ENCODE measurements at regions of chr3 and their contacts with region 1.

Region 1: GRCh38 chr3:83946554-83946953 is 1012.2 kb upstream of the CADM2 start:
- DNase-seq: peak; percentile 26
- H3K4me3 Mint-ChIP-seq: no peak overlapping the region
- H3K27ac Mint-ChIP-seq: peak overlapping the region; percentile 89
- H3K4me1 Mint-ChIP-seq: peaks cover 18% of the 10 kb centered on the region
- H3K27me3 Mint-ChIP-seq: no peaks in the 10 kb centered on the region
- CTCF ChIP-seq: peak; percentile 14

Region 2: DNA sequence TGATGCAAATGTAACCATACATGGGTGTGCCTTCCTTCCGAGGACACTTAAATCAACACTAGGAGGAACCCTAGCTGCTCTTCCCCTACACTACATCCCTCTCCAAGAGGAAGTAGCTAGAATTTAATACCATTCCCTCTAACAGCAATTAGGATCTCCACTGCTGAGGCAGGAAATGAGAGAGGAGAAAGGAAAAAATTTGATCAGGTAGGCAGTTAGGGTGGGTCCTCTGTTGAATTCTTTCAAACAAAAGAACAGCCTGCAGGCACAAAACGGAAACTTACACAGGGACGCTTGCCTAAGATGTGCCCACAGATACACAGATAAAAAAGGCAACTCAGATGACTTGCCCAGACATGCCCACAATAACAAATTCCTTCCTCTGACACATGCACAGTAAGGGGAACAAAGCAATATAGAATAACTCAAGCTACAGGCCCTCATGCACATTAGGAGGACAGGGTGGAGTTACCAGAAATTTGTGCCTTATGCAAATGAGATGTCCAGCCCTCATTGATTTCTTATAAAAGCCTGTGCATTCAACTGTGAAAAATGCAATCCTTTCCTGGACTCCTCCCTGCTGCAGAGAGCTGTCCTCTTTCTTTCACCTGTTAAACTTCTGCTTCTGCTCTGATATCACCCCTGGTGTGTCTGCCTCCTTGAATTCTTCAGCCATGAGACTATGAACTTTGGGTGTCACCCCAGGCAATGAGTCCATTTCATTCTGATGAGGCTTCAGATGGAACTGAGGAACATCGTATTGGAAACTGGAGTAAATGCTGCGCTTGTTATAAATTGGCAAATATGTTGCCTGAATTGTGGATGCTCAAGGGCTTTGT is 12.0 kb before region 1 on chr3:
- CTCF ChIA-PET with region 1: interaction called, 15 read pairs
- POLR2A ChIA-PET with region 1: interaction called, 25 read pairs
- intact Hi-C with region 1: no loop called
- DNase-seq: peak; percentile 96
- H3K4me3 Mint-ChIP-seq: peak overlapping the region; percentile 36
- H3K27ac Mint-ChIP-seq: peak overlapping the region; percentile 99
- H3K4me1 Mint-ChIP-seq: peaks cover 42% of the 10 kb centered on the region
- H3K27me3 Mint-ChIP-seq: no peaks in the 10 kb centered on the region
- CTCF ChIP-seq: peak; percentile 15

Region 3: GRCh38 chr3:84245789-84246188 is 299.2 kb after region 1 on chr3:
- CTCF ChIA-PET with region 1: no interaction called
- POLR2A ChIA-PET with region 1: no interaction called
- intact Hi-C with region 1: no loop called
- DNase-seq: no peak
- H3K4me3 Mint-ChIP-seq: no peak overlapping the region
- H3K27ac Mint-ChIP-seq: no peak overlapping the region
- H3K4me1 Mint-ChIP-seq: no peaks in the 10 kb centered on the region
- H3K27me3 Mint-ChIP-seq: no peaks in the 10 kb centered on the region
- CTCF ChIP-seq: no peak

Measured in MCF 10A (cell line).